A673 (cell line): ENCODE measurements at regions of chr19 and their contacts with region 1.

Region 1: GRCh38 chr19:46265217-46265828 is 31.5 kb upstream of the HIF3A start:
- DNase-seq: peak; percentile 86
- H3K4me3 ChIP-seq: no peak overlapping the region
- H3K27ac ChIP-seq: no peak overlapping the region
- H3K4me1 ChIP-seq: no peaks in the 10 kb centered on the region
- H3K27me3 ChIP-seq: no peaks in the 10 kb centered on the region
- CTCF ChIP-seq: peak; percentile 81

Region 2: DNA sequence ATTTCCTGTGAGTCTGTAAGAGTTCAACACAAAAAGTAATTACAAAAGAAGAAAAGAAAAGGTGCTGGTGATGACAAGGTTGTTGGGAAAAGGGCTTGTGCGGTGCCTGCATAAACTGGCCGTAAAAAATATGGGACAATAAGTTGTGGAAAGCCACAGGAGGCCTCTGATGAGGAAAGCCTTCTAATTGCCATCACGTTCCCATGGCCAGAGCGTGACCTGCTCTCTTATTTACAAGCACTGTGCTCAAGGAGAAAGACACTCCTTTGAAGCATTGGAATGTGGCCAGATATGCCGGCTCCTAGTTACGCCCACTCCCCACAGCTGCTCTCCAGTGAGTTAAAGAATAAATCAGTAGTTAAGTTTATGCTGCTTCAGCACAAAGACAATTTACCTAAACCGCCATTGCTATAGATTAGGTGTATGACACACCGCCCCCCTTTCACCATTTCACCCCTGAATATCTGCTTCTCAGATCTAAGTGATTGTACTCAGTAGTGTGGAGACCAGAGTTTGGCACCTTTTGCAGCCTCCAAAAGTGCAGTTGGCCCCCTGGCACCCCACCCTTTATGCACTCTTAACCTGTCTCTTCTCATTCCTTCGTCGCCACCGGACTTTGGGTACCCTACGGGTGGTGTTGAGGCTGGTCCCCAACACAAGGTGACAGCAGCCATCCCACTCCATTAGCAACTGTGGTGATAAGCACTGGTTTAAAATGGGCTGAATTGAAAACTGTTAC is 234.3 kb before region 1 on chr19:
- CTCF ChIA-PET with region 1: interaction called, 10 read pairs
- POLR2A ChIA-PET with region 1: no interaction called
- intact Hi-C with region 1: loop called (anchors 1 kb)
- DNase-seq: no peak
- H3K4me3 ChIP-seq: no peak overlapping the region
- H3K27ac ChIP-seq: no peak overlapping the region
- H3K4me1 ChIP-seq: no peaks in the 10 kb centered on the region
- H3K27me3 ChIP-seq: no peaks in the 10 kb centered on the region
- CTCF ChIP-seq: no peak

Region 3: DNA sequence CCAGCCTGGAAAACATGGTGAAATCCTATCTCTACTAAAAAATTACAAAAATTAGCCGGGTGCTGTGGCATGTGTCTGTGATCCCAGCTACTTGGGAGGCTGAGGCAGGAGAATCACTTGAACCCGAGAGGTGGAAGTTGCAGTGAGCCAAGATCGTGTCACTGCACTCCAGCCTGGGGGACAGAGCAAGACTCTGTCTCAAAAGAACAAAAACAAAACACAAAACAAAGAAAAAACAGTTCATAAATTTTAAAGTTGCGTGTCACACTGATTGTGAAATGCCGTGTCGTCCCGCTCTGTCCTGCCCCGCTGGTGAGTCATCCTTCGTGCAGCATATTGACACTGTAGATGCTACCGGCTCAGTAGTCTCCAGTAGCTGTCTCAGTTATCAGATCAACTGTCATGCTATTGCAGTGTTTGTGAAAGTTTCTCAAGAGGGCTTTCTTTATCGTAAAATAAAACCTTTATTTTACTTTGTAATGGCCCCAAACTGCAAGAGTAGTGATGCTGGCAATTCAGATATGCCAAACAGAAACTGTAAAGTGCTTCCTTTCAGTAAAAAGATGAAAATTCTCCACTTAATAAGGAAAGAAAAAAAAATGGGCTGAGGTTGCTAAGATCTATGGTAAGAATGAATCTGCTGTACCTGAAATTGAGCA is 72.2 kb before region 1 on chr19:
- CTCF ChIA-PET with region 1: no interaction called
- POLR2A ChIA-PET with region 1: no interaction called
- intact Hi-C with region 1: loop called (anchors 5 kb)
- DNase-seq: peak; percentile 68
- H3K4me3 ChIP-seq: no peak overlapping the region
- H3K27ac ChIP-seq: no peak overlapping the region
- H3K4me1 ChIP-seq: no peaks in the 10 kb centered on the region
- H3K27me3 ChIP-seq: no peaks in the 10 kb centered on the region
- CTCF ChIP-seq: no peak